ENCODE measurements at regions of chr6 and their contacts with region 1.

Region 1: GRCh38 chr6:125773387-125774341 is 17.1 kb upstream of the NCOA7 start:
- DNase-seq: no peak
- ATAC-seq: peak; percentile 75
- H3K4me3 ChIP-seq: no peak overlapping the region
- H3K27ac ChIP-seq: no peak overlapping the region
- H3K4me1 ChIP-seq: no peaks in the 10 kb centered on the region
- H3K27me3 ChIP-seq: no peaks in the 10 kb centered on the region; a peak in 1 of 4 replicates
- CTCF ChIP-seq: no peak
- EP300 ChIP-seq: no peak
- POLR2A ChIP-seq: no peak
- RAD21 ChIP-seq: no peak

Region 2: GRCh38 chr6:125512621-125513020 is 261.0 kb before region 1 on chr6:
- CTCF ChIA-PET with region 1: interaction called, 4 read pairs
- POLR2A ChIA-PET with region 1: no interaction called
- RAD21 ChIA-PET with region 1: no interaction called
- SMC1A ChIA-PET with region 1: interaction called, 3 read pairs
- in situ Hi-C with region 1: no loop called
- intact Hi-C with region 1: loop called (anchors 1 kb)
- DNase-seq: no peak
- ATAC-seq: peak; percentile 81
- H3K4me3 ChIP-seq: no peak overlapping the region
- H3K27ac ChIP-seq: no peak overlapping the region
- H3K4me1 ChIP-seq: no peaks in the 10 kb centered on the region
- H3K27me3 ChIP-seq: 0 out of 4 replicates have a peak, but pooled peaks cover 0 to 4% of the 10 kb centered on the region in 2 experiments
- CTCF ChIP-seq: peak; percentile 55 to 63 (median 60)
- EP300 ChIP-seq: no peak
- POLR2A ChIP-seq: no peak
- RAD21 ChIP-seq: peak; percentile 77